ENCODE measurements at regions of chr9 and their contacts with region 1.

Region 1: GRCh38 chr9:16207161-16207560 is 654.3 kb downstream of the CCDC171 start:
- DNase-seq: no peak
- H3K4me3 ChIP-seq: no peak overlapping the region
- CTCF ChIP-seq: no peak

Region 2: DNA sequence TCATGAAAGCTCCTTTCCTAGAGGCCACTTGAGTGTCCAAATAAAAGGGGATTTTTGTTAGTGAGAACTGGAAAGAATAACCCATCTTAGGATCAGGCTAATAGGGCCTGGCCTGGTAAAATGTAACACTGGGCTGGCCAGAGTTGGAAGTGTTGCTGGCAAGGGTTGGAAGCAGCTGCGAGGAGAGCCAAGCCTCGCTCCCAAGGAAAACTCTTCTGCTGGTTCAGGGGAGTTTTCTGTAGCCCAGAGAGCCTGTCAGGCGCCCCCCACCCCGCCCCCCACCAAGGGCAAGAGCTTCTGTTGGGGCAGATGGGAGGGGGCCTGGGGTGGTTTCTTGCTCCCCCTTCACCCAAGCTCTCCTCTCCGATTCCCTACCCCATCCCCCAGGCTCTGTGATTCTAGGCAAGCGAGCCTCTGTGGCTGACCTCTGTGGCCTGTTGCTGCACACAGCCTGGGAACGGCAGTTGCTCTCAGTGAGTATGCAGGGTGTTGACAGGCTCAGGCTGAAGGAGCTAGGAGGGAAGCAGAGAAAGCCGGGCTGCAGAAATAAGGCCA is 106.5 kb before region 1 on chr9:
- in situ Hi-C with region 1: loop called (anchors 5 kb)
- DNase-seq: no peak
- H3K4me3 ChIP-seq: no peak overlapping the region
- CTCF ChIP-seq: no peak

Region 3: DNA sequence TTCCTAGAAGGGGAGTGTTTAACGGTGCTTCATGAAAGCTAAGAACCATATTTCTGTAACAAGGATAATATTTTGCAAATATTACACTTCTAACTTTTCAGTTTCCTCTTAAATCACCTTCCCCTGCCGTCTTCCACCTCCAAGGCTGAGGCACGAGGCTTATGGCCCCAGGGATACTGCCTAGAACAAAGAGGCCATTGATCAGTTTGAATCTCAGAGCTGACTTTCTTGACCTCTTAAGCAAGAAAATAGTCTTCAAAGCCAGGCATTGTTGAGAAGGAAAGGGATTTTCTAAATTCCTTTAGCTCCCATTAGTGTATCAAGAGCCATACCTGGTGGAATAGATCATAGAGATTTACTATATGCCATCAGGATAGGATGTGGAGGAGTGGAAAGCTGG is 97.1 kb after region 1 on chr9:
- in situ Hi-C with region 1: no loop called
- DNase-seq: no peak
- H3K4me3 ChIP-seq: no peak overlapping the region
- CTCF ChIP-seq: no peak

Region 4: DNA sequence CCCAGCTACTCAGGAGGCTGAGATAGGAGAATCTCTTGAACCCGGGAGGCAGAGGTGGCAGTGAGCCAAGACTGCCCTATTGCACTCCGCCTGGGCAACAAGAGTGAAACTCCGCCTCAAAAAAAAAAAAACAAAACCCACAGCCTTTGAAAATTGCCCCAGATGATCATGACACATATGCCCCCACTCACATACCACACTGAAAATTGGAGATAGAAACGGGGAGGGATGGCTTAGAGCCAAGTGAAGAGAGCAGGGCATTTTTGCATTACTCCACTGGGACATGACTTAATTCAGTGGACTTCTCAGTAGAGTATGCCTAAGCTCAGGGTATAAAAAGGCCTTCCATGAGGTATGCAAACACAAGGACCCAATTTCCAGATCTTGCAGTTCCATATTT is 354.0 kb after region 1 on chr9:
- in situ Hi-C with region 1: no loop called
- DNase-seq: no peak
- H3K4me3 ChIP-seq: no peak overlapping the region
- CTCF ChIP-seq: no peak